Lower lobe of right lung (tissue), 2 donors: ENCODE measurements at regions of chr14 and their contacts with region 1.

Region 1: DNA sequence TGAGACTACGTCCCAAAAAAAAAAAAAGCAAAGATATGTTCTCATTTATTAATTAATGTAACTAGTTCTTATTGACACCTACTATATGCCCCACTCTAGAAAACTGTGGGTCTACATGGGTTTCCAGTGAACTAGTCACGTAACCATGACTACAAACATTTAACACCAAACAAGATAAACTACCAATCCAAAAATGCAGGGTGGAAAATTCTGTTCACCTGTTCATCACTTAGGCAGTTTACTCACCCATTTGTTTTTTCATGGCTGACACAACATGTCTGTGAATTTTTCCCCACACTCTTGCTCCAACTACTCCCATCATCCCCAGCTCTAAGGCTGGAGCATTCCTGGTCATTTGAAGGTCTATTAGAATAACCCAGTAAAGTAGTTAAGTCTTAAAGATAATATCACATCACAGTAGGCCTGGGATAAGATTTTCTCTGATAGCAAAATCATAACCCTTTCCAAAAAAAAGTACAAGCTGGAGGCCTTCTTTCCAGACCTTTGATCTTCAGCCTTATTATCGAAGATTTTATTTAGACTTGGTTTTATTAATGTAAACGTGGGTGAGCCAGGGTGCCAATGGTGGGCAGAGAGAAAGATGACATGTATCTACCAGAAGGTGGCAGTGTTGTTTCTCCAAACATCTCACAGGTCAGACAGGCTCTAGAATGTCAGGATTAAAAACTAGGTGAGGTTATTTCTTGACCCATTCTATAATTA is 61.6 kb upstream of the DAAM1 start:
- DNase-seq: no peak
- ATAC-seq: peak; percentile 76 to 92
- H3K4me3 ChIP-seq: no peak overlapping the region
- H3K27ac ChIP-seq: no peak overlapping the region
- H3K4me1 ChIP-seq: no peaks in the 10 kb centered on the region
- H3K27me3 ChIP-seq: no peaks in the 10 kb centered on the region
- CTCF ChIP-seq: peak; percentile 81

Region 2: GRCh38 chr14:59438195-59438647 is 311.4 kb after region 1 on chr14:
- intact Hi-C with region 1: loop called (anchors 5 kb)
- DNase-seq: no peak
- ATAC-seq: no peak
- H3K4me3 ChIP-seq: no peak overlapping the region
- H3K27ac ChIP-seq: no peak overlapping the region
- H3K4me1 ChIP-seq: no peaks in the 10 kb centered on the region
- H3K27me3 ChIP-seq: no peaks in the 10 kb centered on the region
- CTCF ChIP-seq: no peak